AG04450 (cell line): ENCODE measurements at regions of chr5 and their contacts with region 1.

Region 1: GRCh38 chr5:55994574-55995333 is at the start of gene IL6ST:
- DNase-seq: peak; percentile 92
- H3K4me3 ChIP-seq: peak within 1 kb of the TSS; percentile 80
- H3K27ac ChIP-seq: peak within 1 kb of the TSS; percentile 96
- H3K27me3 ChIP-seq: no peaks in the 10 kb centered on the region
- CTCF ChIP-seq: 0 out of 2 replicates have a peak, but pooled peaks have one; percentile 10
- polyA plus RNA-seq, gene IL6ST: 289 and 448 TPM in 2 replicates

Region 2: DNA sequence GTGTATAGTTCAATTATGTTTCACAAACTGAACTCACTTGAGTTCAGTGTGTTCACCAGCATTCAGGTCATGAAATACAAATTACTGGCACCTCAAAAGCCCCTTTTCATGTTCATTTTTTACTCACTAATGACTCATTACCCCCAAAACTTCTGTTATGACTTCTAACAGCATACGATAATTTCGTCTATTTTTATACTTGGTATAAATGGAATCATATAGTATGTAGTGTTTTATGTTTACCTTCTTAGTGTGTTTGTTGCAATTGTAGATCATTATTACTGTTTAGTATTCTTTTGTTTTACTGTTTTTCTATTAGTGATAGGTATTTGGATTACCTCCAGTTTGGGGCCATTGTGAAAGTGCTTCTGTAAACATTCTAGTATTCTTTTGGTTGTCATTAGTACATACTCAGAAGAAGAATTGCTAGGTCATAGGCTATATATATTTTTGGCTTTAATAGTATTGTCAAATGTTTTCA is 223.5 kb before region 1 on chr5:
- CTCF ChIA-PET with region 1: no interaction called
- POLR2A ChIA-PET with region 1: no interaction called
- DNase-seq: no peak
- H3K4me3 ChIP-seq: no peak overlapping the region
- H3K27ac ChIP-seq: no peak overlapping the region
- H3K27me3 ChIP-seq: no peaks in the 10 kb centered on the region
- CTCF ChIP-seq: no peak

Region 3: DNA sequence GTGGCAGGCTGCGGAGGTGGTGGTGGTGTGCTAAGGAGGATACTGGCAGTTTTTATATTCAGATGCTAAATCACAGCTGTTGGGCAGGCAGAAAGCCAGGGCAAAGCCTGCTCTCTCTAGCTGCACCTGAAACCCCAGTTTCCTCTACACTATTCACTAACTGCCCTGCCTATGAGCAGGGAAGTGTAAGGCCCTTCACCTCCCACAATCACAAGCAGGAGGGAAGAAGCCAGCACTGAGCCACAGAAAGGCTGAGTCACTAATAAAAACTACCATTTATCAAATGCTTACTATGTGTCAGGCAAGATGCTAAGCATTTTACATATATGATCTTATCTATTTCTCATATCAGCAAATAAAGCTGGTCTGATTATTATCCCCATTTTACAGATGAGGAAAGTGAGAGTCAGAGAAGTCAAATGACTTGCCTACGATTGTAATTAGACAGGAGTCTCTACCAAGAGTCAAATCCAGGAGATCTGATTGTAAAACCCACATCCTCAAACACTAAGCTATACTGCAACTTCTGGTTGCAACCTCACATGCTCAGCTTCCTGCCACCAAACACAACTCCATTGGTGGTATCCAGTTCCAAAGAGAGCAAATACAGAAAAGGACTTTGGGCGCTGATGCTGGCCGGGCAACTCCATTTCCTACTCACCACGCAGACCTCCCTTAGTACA is 17.7 kb after region 1 on chr5:
- CTCF ChIA-PET with region 1: no interaction called
- POLR2A ChIA-PET with region 1: interaction called, 12 read pairs
- DNase-seq: no peak
- H3K4me3 ChIP-seq: no peak overlapping the region; the same call in 1 of the 2 replicates
- H3K27ac ChIP-seq: peak overlapping the region; percentile 94
- H3K27me3 ChIP-seq: no peaks in the 10 kb centered on the region
- CTCF ChIP-seq: no peak

Region 4: DNA sequence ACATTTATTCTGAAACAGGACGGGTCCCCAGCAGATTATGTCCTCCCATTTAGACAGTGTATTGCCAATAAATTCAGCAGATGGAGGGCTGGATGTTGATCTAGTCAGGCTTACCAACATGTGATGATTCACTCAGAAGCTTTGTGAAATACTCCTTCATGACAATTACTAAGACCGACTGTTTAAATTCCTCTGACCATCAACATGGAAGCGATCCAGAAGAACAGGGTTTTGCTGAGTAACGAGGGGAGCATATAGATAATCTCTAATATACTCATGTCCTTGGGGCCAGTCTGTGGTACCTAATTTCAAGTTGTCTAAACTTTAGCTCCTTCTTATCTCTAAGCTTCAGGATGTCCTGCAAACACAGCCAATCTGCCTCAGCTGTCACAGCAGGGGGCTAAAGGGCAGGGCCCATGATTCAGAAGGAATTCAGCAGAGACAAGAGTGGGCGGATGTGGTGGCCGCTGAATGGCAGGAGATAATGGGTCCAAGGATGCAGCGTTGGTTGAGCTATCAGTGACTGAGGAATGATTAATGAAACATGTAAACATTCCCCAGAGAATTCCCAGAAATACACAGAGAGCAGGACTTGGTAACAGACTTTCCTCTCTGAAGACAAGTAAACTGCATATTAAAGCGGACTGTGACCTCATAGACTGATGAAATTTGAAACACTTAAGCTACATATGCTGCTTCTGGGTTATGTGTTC is 128.9 kb after region 1 on chr5:
- CTCF ChIA-PET with region 1: no interaction called
- POLR2A ChIA-PET with region 1: interaction called, 13 read pairs
- DNase-seq: peak; percentile 98
- H3K4me3 ChIP-seq: no peak overlapping the region
- H3K27ac ChIP-seq: peak overlapping the region; percentile 90
- H3K27me3 ChIP-seq: no peaks in the 10 kb centered on the region
- CTCF ChIP-seq: no peak

Region 5: DNA sequence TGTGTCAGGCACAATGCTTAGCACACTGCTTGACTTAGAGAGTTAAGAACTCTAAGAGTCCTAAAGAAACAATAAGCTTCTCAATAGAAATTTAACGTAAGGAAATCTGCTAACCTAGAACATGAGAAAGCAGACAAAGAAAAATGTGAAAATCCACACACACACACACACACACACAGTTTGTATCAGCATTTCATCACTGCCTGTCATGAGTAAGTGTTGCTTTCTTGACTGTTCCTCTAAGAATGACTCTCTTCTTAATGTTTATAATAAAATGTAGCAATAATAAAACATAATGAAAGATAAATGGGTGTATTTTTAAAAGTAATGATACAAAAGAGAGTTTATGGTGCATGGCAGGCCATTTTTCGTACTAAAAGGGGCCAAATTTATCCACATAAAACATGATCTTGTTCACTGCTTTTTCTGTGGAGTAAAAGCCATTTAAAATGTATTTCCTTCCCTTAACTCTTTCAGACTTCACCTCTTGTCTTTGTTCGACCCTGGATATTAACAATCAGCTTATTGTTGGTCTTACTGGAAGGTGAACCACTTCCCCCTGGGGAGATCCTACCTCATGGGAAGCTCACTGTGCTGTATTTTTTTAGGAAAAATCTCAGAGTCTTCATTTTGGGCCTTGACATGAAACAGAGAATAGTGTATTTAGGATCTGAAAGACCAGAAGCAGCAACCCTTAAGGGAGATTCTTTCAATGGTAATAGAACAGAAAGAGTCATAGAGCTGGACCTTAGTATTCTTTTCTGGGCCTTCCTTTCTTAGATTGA is 345.6 kb after region 1 on chr5:
- CTCF ChIA-PET with region 1: no interaction called
- POLR2A ChIA-PET with region 1: interaction called, 12 read pairs
- DNase-seq: no peak
- H3K4me3 ChIP-seq: no peak overlapping the region
- H3K27ac ChIP-seq: no peak overlapping the region
- H3K27me3 ChIP-seq: no peaks in the 10 kb centered on the region
- CTCF ChIP-seq: no peak